Common myeloid progenitor, CD34-positive (primary cell): ENCODE measurements at regions of chr13 and their contacts with region 1.

Region 1: GRCh38 chr13:30880856-30881155 is 25.3 kb upstream of the MEDAG start:
- DNase-seq: no peak
- H3K4me3 ChIP-seq: no peak overlapping the region
- H3K27ac ChIP-seq: no peak overlapping the region
- H3K4me1 ChIP-seq: no peaks in the 10 kb centered on the region
- H3K27me3 ChIP-seq: peaks cover 0 to 13% (median 0%) of the 10 kb centered on the region in 5 experiments

Region 2: DNA sequence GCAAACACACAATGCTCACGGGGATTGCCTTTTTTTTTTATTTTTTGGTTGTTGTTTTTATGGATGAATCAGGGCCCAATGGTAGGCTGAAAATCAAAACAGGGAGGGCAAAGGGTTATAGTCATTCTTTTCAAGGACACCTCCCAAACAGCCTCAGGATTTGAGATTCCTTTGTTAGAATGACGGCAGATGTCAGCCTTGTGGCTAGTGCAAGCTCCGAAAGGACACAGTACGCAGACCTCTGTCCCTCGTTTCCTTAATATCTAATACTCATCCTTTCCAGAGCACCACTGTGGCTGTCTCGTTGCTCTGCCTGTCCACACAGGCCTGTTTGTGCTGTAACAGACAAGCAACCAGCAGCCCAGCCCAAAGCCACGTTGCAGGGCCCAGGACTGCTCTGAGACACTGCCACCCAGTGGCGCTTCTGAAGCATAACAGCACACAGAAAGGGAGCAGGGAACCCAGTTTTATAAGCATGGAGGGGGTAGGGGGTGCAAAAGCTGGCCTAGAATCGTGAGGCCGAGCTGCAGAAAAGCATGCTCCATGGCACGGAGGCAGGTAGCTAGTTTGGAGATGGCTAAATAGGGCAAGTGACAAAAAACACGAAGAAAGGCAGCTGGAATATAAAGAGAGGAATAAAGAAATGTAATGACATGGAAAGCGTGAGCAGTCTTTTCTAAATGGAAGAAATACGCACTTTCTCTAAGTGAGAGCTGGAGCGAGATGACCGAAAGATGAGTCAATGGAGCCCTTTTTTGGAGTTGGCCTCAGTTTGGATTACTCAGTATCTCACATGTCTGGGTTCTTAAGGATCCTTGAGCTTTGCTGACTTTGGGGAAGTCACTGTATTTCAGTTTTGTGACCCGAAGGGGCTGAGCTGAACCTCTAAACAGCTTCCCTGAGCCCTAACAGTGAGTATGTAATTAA is 15.4 kb before region 1 on chr13:
- CTCF ChIA-PET with region 1: interaction called, 23 read pairs
- POLR2A ChIA-PET with region 1: no interaction called
- DNase-seq: peak; percentile 63 to 76 (median 74)
- H3K4me3 ChIP-seq: no peak overlapping the region
- H3K27ac ChIP-seq: no peak overlapping the region
- H3K4me1 ChIP-seq: peaks cover 0 to 3% (median 0%) of the 10 kb centered on the region in 4 experiments
- H3K27me3 ChIP-seq: peaks cover 0 to 10% (median 4%) of the 10 kb centered on the region in 5 experiments

Region 3: GRCh38 chr13:30915691-30916541 is 35.1 kb after region 1 on chr13:
- CTCF ChIA-PET with region 1: no interaction called
- POLR2A ChIA-PET with region 1: no interaction called
- DNase-seq: no peak
- H3K4me3 ChIP-seq: no peak overlapping the region
- H3K27ac ChIP-seq: no peak overlapping the region
- H3K4me1 ChIP-seq: peaks cover 0 to 7% (median 2%) of the 10 kb centered on the region in 4 experiments
- H3K27me3 ChIP-seq: peaks cover 0 to 2% (median 0%) of the 10 kb centered on the region in 5 experiments